CD4-positive, alpha-beta T cell (primary cell): ENCODE measurements at regions of chr2 and their contacts with region 1.

Region 1: GRCh38 chr2:162041485-162041884 is 32.5 kb downstream of the DPP4 start:
- DNase-seq: no peak
- ATAC-seq: no peak
- H3K4me3 ChIP-seq: no peak overlapping the region
- H3K4me3 Mint-ChIP-seq: no peak overlapping the region
- H3K27ac ChIP-seq: no peak overlapping the region
- H3K27ac Mint-ChIP-seq: no peak overlapping the region
- H3K4me1 ChIP-seq: no peaks in the 10 kb centered on the region
- H3K4me1 Mint-ChIP-seq: peaks cover 2% of the 10 kb centered on the region
- H3K27me3 ChIP-seq: no peaks in the 10 kb centered on the region
- H3K27me3 Mint-ChIP-seq: no peaks in the 10 kb centered on the region
- CTCF ChIP-seq: no peak

Region 2: GRCh38 chr2:161651547-161651946 is 389.9 kb before region 1 on chr2:
- CTCF ChIA-PET with region 1: no interaction called
- POLR2A ChIA-PET with region 1: no interaction called
- intact Hi-C with region 1: no loop called
- DNase-seq: peak in 1 of 14 experiments; percentile 3
- ATAC-seq: no peak
- H3K4me3 ChIP-seq: no peak overlapping the region
- H3K4me3 Mint-ChIP-seq: no peak overlapping the region
- H3K27ac ChIP-seq: no peak overlapping the region
- H3K27ac Mint-ChIP-seq: no peak overlapping the region
- H3K4me1 ChIP-seq: no peaks in the 10 kb centered on the region
- H3K4me1 Mint-ChIP-seq: no peaks in the 10 kb centered on the region
- H3K27me3 ChIP-seq: no peaks in the 10 kb centered on the region
- H3K27me3 Mint-ChIP-seq: no peaks in the 10 kb centered on the region
- CTCF ChIP-seq: no peak

Region 3: GRCh38 chr2:162030363-162031190 is 10.9 kb before region 1 on chr2:
- CTCF ChIA-PET with region 1: interaction called, 4 read pairs
- POLR2A ChIA-PET with region 1: no interaction called
- intact Hi-C with region 1: loop called in 1 of 2 experiments (anchors 2 kb)
- DNase-seq: no peak
- ATAC-seq: no peak
- H3K4me3 ChIP-seq: no peak overlapping the region
- H3K4me3 Mint-ChIP-seq: no peak overlapping the region
- H3K27ac ChIP-seq: no peak overlapping the region
- H3K27ac Mint-ChIP-seq: no peak overlapping the region
- H3K4me1 ChIP-seq: no peaks in the 10 kb centered on the region
- H3K4me1 Mint-ChIP-seq: peaks cover 14% of the 10 kb centered on the region
- H3K27me3 ChIP-seq: no peaks in the 10 kb centered on the region
- H3K27me3 Mint-ChIP-seq: no peaks in the 10 kb centered on the region
- CTCF ChIP-seq: no peak